Aorta (tissue), 5 donors: ENCODE measurements at regions of chr11 and their contacts with region 1.

Region 1: DNA sequence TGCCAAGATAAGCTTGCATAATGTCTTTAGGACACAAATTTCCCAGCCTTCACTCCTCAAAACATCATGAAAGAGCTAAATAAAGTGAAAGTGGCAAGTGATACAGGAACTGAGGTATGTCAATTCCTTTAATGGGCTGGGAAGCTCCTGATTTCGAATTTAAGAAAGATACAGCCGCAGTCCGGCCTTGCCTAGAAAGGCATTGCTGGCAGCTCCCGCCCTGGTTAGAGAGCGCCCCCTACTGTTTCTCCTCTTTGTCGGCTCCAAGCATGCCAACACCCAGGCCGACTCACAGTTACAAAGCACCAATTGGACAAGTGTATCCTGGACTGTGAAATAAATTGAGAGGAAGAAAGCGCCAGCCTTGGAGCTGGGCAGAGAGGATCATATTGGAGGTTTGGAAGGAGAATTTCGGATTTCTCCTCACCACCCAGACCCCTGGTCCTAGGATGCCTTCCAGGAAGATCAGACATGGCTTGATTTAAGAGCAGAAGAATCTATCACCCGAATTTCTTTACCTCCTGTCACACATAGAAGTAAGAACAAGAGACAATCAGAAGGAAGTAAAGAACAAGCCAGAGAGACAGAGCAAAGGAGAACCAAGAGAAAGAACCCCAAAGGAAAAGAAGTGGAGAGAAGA is 84.0 kb downstream of the FAM76B start:
- DNase-seq: peak; percentile 91 to 92
- ATAC-seq: peak; percentile 96
- H3K4me3 ChIP-seq: no peak overlapping the region
- H3K27ac ChIP-seq: peak overlapping the region; percentile 28 to 72
- H3K4me1 ChIP-seq: peaks cover 0 to 4% of the 10 kb centered on the region in 2 donors
- H3K27me3 ChIP-seq: no peaks in the 10 kb centered on the region

Region 2: GRCh38 chr11:95337175-95337957 is 368.2 kb before region 1 on chr11:
- intact Hi-C with region 1: loop called in 1 of 2 experiments (anchors 10 kb)
- DNase-seq: peak; percentile 81 to 84
- ATAC-seq: peak; percentile 66
- H3K4me3 ChIP-seq: no peak overlapping the region
- H3K27ac ChIP-seq: peak overlapping the region; percentile 83 to 96
- H3K4me1 ChIP-seq: peaks cover 5 to 8% of the 10 kb centered on the region in 2 donors
- H3K27me3 ChIP-seq: no peaks in the 10 kb centered on the region

Region 3: GRCh38 chr11:95577716-95578460 is 127.7 kb before region 1 on chr11:
- intact Hi-C with region 1: loop called in 1 of 2 experiments (anchors 10 kb)
- DNase-seq: no peak
- ATAC-seq: no peak
- H3K4me3 ChIP-seq: no peak overlapping the region
- H3K27ac ChIP-seq: no peak overlapping the region
- H3K4me1 ChIP-seq: peaks cover 7 to 8% of the 10 kb centered on the region in 2 donors
- H3K27me3 ChIP-seq: no peaks in the 10 kb centered on the region